Heart right ventricle (tissue), 16 donors: ENCODE measurements at regions of chr19 and their contacts with region 1.

Region 1: DNA sequence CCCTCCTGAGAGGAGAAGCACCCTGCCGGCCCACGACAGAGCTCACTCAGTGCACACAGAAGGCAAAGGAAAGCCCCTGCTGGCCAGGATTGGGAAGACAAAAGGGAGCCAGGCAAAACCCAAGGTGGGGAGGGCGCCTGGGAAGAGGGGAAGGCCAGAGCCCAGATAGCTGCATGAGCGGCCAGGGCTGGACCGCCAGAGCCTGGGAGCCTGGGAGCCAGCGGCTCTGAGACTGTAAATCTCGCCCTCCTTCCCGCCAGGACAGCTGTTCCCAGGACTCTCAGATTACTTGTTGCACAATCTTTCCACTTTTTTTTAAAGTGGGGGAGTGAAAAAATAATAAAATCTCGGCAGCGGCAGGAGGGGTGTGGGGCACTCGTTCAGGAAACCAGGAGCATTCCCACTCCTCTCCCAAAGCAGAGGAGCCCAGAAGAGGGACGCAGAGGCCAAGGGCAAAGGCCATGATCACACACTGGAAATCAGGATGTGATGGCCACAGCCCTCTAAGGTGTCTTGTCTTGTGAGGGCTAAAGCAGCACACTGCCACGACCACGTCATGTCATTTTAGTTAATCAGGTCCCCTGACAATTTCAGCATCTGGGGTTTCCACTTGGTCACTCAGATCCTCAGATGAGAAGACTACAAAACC is 19.6 kb upstream of the EPHX3 start:
- DNase-seq: peak; percentile 83 to 86
- ATAC-seq: peak; percentile 54 to 71 (median 65)
- H3K4me3 ChIP-seq: peak overlapping the region in 7 of 10 donors; percentile 2 to 32 (median 15)
- H3K27ac ChIP-seq: peak overlapping the region; percentile 72 to 94 (median 92)
- H3K4me1 ChIP-seq: peaks cover 60 to 76% (median 72%) of the 10 kb centered on the region in 9 donors
- H3K27me3 ChIP-seq: no peaks in the 10 kb centered on the region
- CTCF ChIP-seq: peak; percentile 14 to 61 (median 50)

Region 2: DNA sequence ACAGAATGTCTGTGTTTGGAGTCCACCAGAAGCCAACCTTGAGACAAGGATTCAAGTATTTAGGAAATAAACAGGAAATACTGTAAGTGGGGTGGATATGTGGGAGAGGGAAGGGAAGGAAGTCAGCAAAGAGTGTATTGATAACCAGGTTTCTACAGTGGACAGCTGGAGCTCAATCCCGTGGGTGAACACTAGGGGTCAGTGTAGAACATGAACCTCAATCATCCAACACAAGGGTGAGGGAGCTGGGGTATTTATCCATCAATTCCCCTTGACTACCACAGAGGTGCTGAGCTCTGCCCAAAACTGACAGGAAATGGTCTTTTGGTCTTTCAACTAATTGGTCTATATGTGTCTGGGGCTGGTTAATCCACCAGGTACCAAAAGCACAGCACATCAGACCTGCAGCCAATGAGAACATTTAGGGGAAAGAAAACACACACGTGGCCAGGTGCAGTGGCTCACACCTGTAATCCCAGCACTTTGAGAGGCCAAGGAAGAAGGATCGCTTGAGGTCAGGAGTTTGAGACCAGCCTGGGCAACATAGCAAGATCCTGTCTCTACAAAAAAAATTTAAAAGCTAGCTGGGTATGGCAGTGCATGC is 150.3 kb before region 1 on chr19:
- intact Hi-C with region 1: loop called in 3 of 10 experiments (anchors 10 kb)
- DNase-seq: no peak
- ATAC-seq: peak; percentile 41 to 79 (median 62)
- H3K4me3 ChIP-seq: no peak overlapping the region
- H3K27ac ChIP-seq: peak overlapping the region in 2 of 10 donors; percentile 34 to 44
- H3K4me1 ChIP-seq: peaks cover 0 to 11% (median 0%) of the 10 kb centered on the region in 9 donors
- H3K27me3 ChIP-seq: peaks cover 0 to 8% (median 0%) of the 10 kb centered on the region in 7 donors
- CTCF ChIP-seq: peak; percentile 46 to 77 (median 75)

Region 3: GRCh38 chr19:15115111-15116053 is 136.5 kb before region 1 on chr19:
- intact Hi-C with region 1: loop called in 1 of 10 experiments (anchors 10 kb)
- DNase-seq: peak; percentile 89 to 91
- ATAC-seq: peak; percentile 73 to 92 (median 82)
- H3K4me3 ChIP-seq: no peak overlapping the region
- H3K27ac ChIP-seq: peak overlapping the region in 9 of 10 donors; percentile 53 to 79 (median 65)
- H3K4me1 ChIP-seq: peaks cover 10 to 33% (median 23%) of the 10 kb centered on the region in 9 donors
- H3K27me3 ChIP-seq: no peaks in the 10 kb centered on the region
- CTCF ChIP-seq: no peak

Region 4: DNA sequence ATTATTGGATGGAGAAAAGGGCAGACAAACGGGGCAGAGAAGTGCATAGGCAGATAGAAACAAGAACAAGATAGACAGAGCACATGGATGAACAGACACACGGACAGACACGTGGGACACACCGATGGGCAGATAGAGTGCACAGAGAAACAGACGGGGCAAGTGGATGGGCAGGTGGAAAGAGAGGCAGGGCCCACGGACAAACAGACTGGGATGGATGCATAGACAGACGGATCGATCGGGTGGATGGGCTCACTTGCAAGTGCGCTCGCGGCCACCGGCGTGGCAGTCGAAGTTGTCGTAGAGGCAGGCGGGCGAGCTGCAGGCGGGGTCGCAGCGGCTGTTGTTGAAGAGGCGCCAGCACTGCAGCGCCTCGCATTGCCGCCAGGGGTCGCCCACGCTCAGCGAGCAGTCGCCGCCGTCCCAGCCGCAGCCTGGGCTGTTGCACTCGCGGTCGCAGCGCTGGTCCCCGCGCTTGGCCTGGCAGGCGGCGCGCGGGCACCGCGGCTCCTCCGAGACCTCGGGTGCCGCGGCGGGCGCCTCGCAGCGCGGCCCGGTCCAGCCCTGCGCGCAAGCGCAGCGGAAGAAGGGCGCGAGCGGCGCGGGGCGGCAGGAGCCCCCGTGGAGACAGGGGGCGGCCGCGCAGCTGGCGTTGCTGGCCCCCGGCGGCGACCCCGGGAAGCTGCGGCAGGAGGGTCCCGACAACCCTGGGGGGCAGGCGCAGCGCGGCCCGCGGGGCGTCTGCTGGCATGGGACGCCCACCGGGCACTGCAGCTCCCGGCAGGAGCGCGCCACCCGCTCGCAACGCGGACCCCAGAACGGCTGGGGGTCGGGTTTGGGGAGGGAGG is 74.4 kb before region 1 on chr19:
- intact Hi-C with region 1: loop called in 6 of 10 experiments (anchors 5 kb)
- DNase-seq: peak; percentile 70 to 86
- ATAC-seq: peak; percentile 76 to 88 (median 83)
- H3K4me3 ChIP-seq: peak overlapping the region in 4 of 10 donors; percentile 14 to 39 (median 27)
- H3K27ac ChIP-seq: peak overlapping the region in 1 of 10 donors; percentile 40
- H3K4me1 ChIP-seq: peaks cover 0 to 13% (median 5%) of the 10 kb centered on the region in 9 donors
- H3K27me3 ChIP-seq: peaks cover 0 to 22% (median 7%) of the 10 kb centered on the region in 7 donors
- CTCF ChIP-seq: peak; percentile 90 to 99 (median 95)

Region 5: DNA sequence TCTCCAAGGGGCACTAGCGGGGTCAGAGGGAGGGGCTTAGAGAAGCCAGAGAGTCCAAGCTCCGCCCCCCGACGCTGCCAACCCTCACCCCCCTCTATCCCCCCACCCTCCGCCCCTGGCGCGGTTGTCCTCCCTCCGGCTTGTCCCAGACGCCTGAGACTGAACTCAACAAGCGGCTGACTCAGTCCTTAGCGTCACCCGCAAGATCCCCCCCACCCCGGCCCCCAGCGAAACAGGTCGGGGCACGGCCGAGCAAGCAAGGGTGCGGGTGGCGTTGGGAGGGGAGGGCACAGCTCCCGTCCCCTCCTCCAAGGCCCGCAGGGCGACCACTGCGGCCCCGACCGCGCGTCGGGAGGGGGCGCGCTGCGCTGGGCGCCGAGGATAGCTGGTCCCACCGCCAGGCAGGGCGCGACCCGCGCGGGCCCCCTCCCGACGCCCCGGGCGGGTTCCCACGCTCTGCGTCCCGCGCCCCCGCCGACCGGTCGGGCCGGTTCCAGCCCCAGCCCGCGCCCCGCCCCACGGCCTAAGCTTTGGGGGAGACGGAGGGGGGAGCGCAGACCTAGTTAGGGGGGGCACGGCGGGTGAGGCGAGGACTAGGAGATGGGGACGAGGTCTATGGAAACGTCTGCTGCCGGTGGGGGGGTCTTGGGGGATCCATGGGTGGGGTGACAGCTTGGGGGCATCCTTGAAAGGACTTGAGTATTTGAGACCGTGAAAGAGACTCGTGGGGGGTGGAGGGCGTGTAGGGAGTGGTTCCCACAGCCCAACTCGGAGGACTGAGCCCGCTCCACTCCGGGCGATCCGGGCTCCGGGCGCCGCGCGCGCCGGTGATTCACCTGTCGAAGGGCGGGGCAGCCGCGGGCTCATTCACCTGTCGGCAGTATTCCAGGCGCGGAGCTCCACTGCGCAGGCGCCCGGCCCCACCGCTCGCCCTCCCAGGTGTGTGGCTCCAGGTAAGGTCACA is 56.2 kb before region 1 on chr19:
- intact Hi-C with region 1: loop called in 1 of 10 experiments (anchors 5 kb)
- DNase-seq: peak; percentile 55 to 67
- ATAC-seq: peak; percentile 56 to 63 (median 60)
- H3K4me3 ChIP-seq: peak overlapping the region; percentile 3 to 66 (median 38)
- H3K27ac ChIP-seq: peak overlapping the region; percentile 25 to 88 (median 50)
- H3K4me1 ChIP-seq: peaks cover 0 to 42% (median 14%) of the 10 kb centered on the region in 9 donors
- H3K27me3 ChIP-seq: peaks cover 5 to 81% (median 63%) of the 10 kb centered on the region in 7 donors
- CTCF ChIP-seq: peak in 4 of 9 donors; percentile 7 to 33 (median 28)

Region 6: GRCh38 chr19:15210323-15210781 is 41.5 kb before region 1 on chr19:
- intact Hi-C with region 1: loop called in 1 of 10 experiments (anchors 5 kb)
- DNase-seq: peak; percentile 30 to 34
- ATAC-seq: peak; percentile 9 to 91 (median 70)
- H3K4me3 ChIP-seq: no peak overlapping the region
- H3K27ac ChIP-seq: peak overlapping the region in 7 of 10 donors; percentile 40 to 81 (median 65)
- H3K4me1 ChIP-seq: peaks cover 0 to 47% (median 8%) of the 10 kb centered on the region in 9 donors
- H3K27me3 ChIP-seq: peaks cover 0 to 4% (median 0%) of the 10 kb centered on the region in 7 donors
- CTCF ChIP-seq: no peak

Region 7: GRCh38 chr19:15288146-15288963 is 36.5 kb after region 1 on chr19:
- intact Hi-C with region 1: no loop called
- DNase-seq: no peak
- ATAC-seq: peak in 7 of 8 donors; percentile 28 to 55 (median 38)
- H3K4me3 ChIP-seq: no peak overlapping the region
- H3K27ac ChIP-seq: peak overlapping the region in 4 of 10 donors; percentile 10 to 38 (median 22)
- H3K4me1 ChIP-seq: peaks cover 44 to 100% (median 100%) of the 10 kb centered on the region in 9 donors
- H3K27me3 ChIP-seq: no peaks in the 10 kb centered on the region
- CTCF ChIP-seq: no peak

Region 8: GRCh38 chr19:15418588-15419412 is 166.9 kb after region 1 on chr19 and contains the start of gene AKAP8L:
- intact Hi-C with region 1: loop called in 1 of 10 experiments (anchors 5 kb)
- DNase-seq: peak; percentile 97 to 100
- ATAC-seq: peak; percentile 95 to 98 (median 97)
- H3K4me3 ChIP-seq: peak within 1 kb of the TSS; percentile 69 to 99 (median 92)
- H3K27ac ChIP-seq: peak within 1 kb of the TSS; percentile 42 to 93 (median 90)
- H3K4me1 ChIP-seq: peaks cover 4 to 70% (median 36%) of the 10 kb centered on the region in 9 donors
- H3K27me3 ChIP-seq: no peaks in the 10 kb centered on the region
- CTCF ChIP-seq: peak; percentile 35 to 84 (median 70)
- total RNA-seq, gene AKAP8L: 45.2 to 101 (median 63.1) TPM